Aorta (tissue), 5 donors: ENCODE measurements at regions of chr5 and their contacts with region 1.

Region 1: GRCh38 chr5:6765612-6766525 is 52.6 kb downstream of the TENT4A start:
- DNase-seq: peak; percentile 90 to 93
- ATAC-seq: peak; percentile 84
- H3K4me3 ChIP-seq: no peak overlapping the region
- H3K27ac ChIP-seq: no peak overlapping the region
- H3K4me1 ChIP-seq: no peaks in the 10 kb centered on the region
- H3K27me3 ChIP-seq: no peaks in the 10 kb centered on the region

Region 2: GRCh38 chr5:6812800-6813731 is 47.2 kb after region 1 on chr5:
- intact Hi-C with region 1: loop called in 1 of 2 experiments (anchors 5 kb)
- DNase-seq: peak in 1 of 2 donors; percentile 60
- ATAC-seq: peak; percentile 74
- H3K4me3 ChIP-seq: no peak overlapping the region
- H3K27ac ChIP-seq: no peak overlapping the region
- H3K4me1 ChIP-seq: no peaks in the 10 kb centered on the region
- H3K27me3 ChIP-seq: no peaks in the 10 kb centered on the region

Region 3: GRCh38 chr5:6832994-6833393 is 67.1 kb after region 1 on chr5:
- intact Hi-C with region 1: loop called (anchors 2 to 5 kb)
- DNase-seq: peak in 1 of 2 donors; percentile 78
- ATAC-seq: no peak
- H3K4me3 ChIP-seq: no peak overlapping the region
- H3K27ac ChIP-seq: no peak overlapping the region
- H3K4me1 ChIP-seq: peaks cover 4 to 5% of the 10 kb centered on the region in 2 donors
- H3K27me3 ChIP-seq: no peaks in the 10 kb centered on the region

Region 4: GRCh38 chr5:6843821-6844220 is 78.0 kb after region 1 on chr5:
- intact Hi-C with region 1: no loop called
- DNase-seq: no peak
- ATAC-seq: no peak
- H3K4me3 ChIP-seq: no peak overlapping the region
- H3K27ac ChIP-seq: no peak overlapping the region
- H3K4me1 ChIP-seq: no peaks in the 10 kb centered on the region
- H3K27me3 ChIP-seq: no peaks in the 10 kb centered on the region

Region 5: GRCh38 chr5:7261049-7261448 is 495.2 kb after region 1 on chr5:
- intact Hi-C with region 1: loop called in 1 of 2 experiments (anchors 10 kb)
- DNase-seq: no peak
- ATAC-seq: no peak
- H3K4me3 ChIP-seq: no peak overlapping the region
- H3K27ac ChIP-seq: no peak overlapping the region
- H3K4me1 ChIP-seq: no peaks in the 10 kb centered on the region
- H3K27me3 ChIP-seq: no peaks in the 10 kb centered on the region

Region 6: GRCh38 chr5:7391814-7392692 is 626.2 kb after region 1 on chr5:
- intact Hi-C with region 1: loop called (anchors 5 kb)
- DNase-seq: no peak
- ATAC-seq: no peak
- H3K4me3 ChIP-seq: no peak overlapping the region
- H3K27ac ChIP-seq: no peak overlapping the region
- H3K4me1 ChIP-seq: no peaks in the 10 kb centered on the region
- H3K27me3 ChIP-seq: no peaks in the 10 kb centered on the region

Region 7: GRCh38 chr5:7745882-7746610 is 980.2 kb after region 1 on chr5:
- intact Hi-C with region 1: loop called (anchors 5 kb)
- DNase-seq: peak; percentile 80 to 85
- ATAC-seq: no peak
- H3K4me3 ChIP-seq: no peak overlapping the region
- H3K27ac ChIP-seq: no peak overlapping the region
- H3K4me1 ChIP-seq: no peaks in the 10 kb centered on the region
- H3K27me3 ChIP-seq: no peaks in the 10 kb centered on the region